ENCODE measurements at regions of chr15 and their contacts with region 1.

Region 1: DNA sequence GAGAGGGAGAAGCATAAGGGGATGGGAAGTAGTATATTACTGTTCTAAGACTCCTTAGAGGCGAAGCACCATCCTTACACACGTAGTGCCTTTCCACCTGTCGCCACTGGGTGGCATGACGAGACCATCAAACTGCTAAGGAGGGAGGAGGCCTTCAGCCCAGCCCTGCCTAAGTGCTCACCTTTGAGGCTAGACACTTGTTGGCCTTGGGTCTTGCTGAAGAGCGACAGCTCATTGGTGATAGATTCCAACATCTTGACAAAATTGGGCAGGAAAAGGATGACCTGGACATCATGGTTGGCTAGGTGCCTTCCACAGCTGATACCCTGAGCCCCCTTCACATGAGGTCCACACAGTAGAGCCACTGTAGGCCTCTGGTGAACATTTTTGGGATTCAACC is 19.6 kb downstream of the CLK3 start:
- DNase-seq: peak; percentile 84
- ATAC-seq: peak; percentile 94
- H3K4me3 Mint-ChIP-seq: no peak overlapping the region
- H3K27ac Mint-ChIP-seq: peak overlapping the region; percentile 39
- H3K4me1 Mint-ChIP-seq: no peaks in the 10 kb centered on the region
- H3K27me3 Mint-ChIP-seq: no peaks in the 10 kb centered on the region
- CTCF ChIP-seq: peak; percentile 89

Region 2: GRCh38 chr15:74525946-74526345 is 109.3 kb before region 1 on chr15:
- CTCF ChIA-PET with region 1: no interaction called
- POLR2A ChIA-PET with region 1: no interaction called
- intact Hi-C with region 1: no loop called
- DNase-seq: no peak
- ATAC-seq: no peak
- H3K4me3 Mint-ChIP-seq: no peak overlapping the region
- H3K27ac Mint-ChIP-seq: no peak overlapping the region
- H3K4me1 Mint-ChIP-seq: peaks cover 5% of the 10 kb centered on the region
- H3K27me3 Mint-ChIP-seq: no peaks in the 10 kb centered on the region
- CTCF ChIP-seq: no peak

Region 3: DNA sequence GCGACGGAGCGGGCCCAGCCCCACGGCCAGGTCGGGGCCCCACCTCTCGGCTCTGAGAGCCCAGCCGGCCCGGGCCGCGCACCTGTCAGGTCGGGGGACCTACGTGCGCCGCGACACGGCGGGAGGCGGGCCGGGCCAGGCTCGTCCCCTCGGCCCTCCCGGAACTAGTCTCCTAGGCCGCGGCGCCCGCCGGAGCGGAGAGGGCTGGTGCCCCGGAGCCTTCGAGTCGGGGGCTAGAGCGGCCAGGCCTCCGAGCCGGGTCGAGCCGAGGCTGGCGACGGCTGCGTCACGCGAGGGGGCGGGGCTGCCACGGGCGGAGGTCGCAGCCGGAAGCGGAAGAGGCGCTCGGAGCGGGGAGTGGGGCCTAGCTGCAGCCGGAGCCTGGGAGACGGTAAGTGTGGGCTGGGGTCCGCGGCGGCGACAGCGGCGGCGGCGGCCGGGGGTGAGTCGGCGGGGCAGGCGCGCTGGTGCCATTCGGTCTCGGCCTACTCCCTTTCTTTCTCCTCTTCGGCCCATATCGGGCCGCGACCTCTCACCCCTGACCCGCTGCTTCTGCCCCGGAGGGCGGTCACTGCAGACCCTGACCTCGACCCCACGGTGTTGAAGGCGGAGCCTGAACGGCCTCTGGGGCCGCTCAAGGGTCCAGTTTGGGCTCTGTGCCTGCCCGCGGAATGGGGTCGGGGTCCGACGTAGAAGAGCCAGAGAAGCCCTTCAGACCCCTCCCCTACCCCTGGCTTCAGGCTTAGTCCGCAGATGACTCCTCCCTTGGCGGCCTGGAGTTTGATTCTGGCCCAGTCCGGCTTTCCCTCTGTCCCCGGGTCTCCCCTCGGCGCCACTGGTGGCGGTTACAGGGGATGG is 19.5 kb before region 1 on chr15 and contains the start of gene CLK3:
- CTCF ChIA-PET with region 1: interaction called, 203 read pairs
- POLR2A ChIA-PET with region 1: interaction called, 4 read pairs
- intact Hi-C with region 1: no loop called
- DNase-seq: peak; percentile 97
- ATAC-seq: peak; percentile 88
- H3K4me3 Mint-ChIP-seq: peak within 1 kb of the TSS; percentile 92
- H3K27ac Mint-ChIP-seq: peak within 1 kb of the TSS; percentile 98
- H3K4me1 Mint-ChIP-seq: peaks cover 43% of the 10 kb centered on the region
- H3K27me3 Mint-ChIP-seq: no peaks in the 10 kb centered on the region
- CTCF ChIP-seq: no peak
- total RNA-seq, gene CLK3: 159 to 168 TPM

Region 4: DNA sequence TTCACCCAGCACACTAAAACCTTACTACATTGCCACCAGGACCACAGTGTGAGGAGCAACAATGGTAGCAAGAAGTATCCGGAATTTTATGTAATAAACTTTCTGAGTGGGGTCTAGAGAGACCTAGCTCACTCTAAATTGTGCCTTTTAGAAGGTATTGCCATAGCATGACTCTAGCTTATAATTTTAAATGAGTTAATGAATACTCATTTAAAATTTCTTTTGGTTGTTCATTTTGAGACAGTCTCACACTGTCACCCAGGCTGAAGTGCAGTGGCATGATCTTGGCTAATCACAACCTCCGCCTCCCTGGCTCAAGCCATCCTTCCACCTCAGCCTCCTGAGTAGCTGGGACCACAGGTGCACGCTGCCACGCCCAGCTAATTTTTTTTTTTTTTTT is 34.4 kb after region 1 on chr15:
- CTCF ChIA-PET with region 1: interaction called, 14 read pairs
- POLR2A ChIA-PET with region 1: no interaction called
- intact Hi-C with region 1: no loop called
- DNase-seq: no peak
- ATAC-seq: no peak
- H3K4me3 Mint-ChIP-seq: no peak overlapping the region
- H3K27ac Mint-ChIP-seq: no peak overlapping the region
- H3K4me1 Mint-ChIP-seq: peaks cover 6% of the 10 kb centered on the region
- H3K27me3 Mint-ChIP-seq: no peaks in the 10 kb centered on the region
- CTCF ChIP-seq: no peak

Region 5: DNA sequence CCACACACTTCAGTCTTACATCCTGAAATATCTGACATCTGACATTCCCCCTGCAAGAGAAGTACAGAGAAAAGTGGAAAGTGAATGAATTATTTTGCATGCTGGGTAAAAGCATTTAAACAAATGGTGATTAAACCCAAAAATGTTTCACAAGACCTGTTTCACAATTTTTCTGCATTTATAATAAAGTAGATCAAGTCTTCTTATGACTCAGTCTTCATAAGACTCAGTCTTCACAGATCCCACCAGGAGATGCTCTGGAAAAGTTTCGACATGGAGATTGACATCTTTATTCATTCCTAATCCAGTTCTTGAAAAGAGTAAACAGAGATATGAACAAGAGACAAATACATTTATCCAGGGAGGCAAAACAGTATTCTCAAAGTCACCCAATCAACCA is 73.8 kb after region 1 on chr15:
- CTCF ChIA-PET with region 1: no interaction called
- POLR2A ChIA-PET with region 1: no interaction called
- intact Hi-C with region 1: no loop called
- DNase-seq: no peak
- ATAC-seq: no peak
- H3K4me3 Mint-ChIP-seq: no peak overlapping the region
- H3K27ac Mint-ChIP-seq: no peak overlapping the region
- H3K4me1 Mint-ChIP-seq: peaks cover 5% of the 10 kb centered on the region
- H3K27me3 Mint-ChIP-seq: peaks cover 9% of the 10 kb centered on the region
- CTCF ChIP-seq: no peak

Region 6: GRCh38 chr15:74754593-74755215 is 119.5 kb after region 1 on chr15:
- CTCF ChIA-PET with region 1: interaction called, 576 read pairs
- POLR2A ChIA-PET with region 1: no interaction called
- intact Hi-C with region 1: no loop called
- DNase-seq: no peak
- ATAC-seq: no peak
- H3K4me3 Mint-ChIP-seq: no peak overlapping the region
- H3K27ac Mint-ChIP-seq: no peak overlapping the region
- H3K4me1 Mint-ChIP-seq: no peaks in the 10 kb centered on the region
- H3K27me3 Mint-ChIP-seq: no peaks in the 10 kb centered on the region
- CTCF ChIP-seq: no peak

Region 7: DNA sequence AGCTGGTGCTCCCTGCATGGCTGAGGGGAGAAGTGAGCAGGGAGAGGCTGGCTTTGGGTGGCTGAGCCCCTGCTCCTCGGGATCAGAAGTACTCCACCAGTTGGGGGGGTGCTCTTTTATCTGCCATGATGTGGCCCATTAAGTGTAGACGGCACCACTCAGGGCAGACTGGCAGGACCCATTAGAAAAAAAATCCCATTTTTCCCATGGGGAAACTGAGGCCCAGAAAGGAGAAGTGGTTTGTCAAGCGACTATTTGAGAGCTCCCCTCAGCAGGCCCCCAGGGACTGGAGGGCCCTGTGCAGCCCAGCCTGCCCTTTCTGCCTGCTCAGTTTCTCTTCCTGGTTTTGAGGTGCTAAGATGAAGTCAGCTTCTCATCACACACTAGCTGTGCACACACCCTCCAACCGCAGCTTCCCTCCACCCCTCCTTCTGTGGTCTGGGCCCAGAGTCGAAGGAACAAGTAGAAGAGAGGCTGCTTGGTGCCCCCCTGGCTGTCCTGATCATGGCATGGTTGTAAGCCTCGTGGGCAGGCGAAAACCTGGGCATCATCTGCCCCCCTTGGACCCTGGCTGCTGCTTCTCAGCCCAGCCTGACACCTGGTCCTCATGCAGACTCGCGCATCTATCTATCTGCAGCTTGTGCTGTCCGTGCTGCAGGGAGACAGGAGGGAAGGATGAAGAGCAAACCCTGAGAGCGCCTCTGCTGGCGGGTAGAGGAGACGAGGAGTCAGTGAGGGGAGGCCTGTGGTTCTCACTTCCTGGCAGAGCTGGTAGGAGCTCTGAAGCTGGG is 152.2 kb after region 1 on chr15:
- CTCF ChIA-PET with region 1: interaction called, 13 read pairs
- POLR2A ChIA-PET with region 1: interaction called, 3 read pairs
- intact Hi-C with region 1: no loop called
- DNase-seq: peak; percentile 98
- ATAC-seq: peak; percentile 70
- H3K4me3 Mint-ChIP-seq: peak overlapping the region; percentile 98
- H3K27ac Mint-ChIP-seq: peak overlapping the region; percentile 98
- H3K4me1 Mint-ChIP-seq: peaks cover 53% of the 10 kb centered on the region
- H3K27me3 Mint-ChIP-seq: no peaks in the 10 kb centered on the region
- CTCF ChIP-seq: peak; percentile 81

Region 8: DNA sequence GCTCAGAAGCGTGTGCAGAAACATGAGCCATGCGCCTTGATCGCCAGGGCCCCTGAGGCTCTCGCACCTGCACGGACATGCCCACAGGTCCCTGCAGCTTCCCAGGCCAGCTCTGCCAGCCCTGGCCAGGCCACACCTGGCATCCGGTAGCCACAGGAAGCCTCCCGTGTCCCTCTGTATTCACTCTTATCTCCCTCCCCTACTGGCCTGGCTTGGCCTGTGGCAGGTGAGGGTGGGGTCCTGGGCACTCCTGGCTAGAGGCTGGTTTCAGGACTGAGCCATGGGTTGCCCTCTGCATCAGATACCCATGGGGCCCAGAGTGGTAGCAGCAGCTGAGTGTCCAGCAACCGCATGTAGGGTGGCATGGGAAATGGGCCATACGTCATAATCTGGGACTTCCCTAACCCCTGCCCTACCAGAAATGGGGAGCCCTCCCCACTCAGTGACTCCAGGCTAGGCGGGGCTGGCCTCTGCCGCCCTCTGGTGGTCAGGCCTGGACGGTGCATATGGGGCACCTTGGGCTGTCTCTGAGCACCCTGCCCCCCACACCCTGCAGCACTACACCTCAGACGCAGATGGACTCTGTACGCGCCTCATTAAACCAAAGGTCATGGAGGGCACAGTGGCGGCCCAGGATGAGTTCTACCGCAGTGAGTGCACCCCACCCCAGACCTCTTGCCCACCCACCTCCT is 164.8 kb after region 1 on chr15:
- CTCF ChIA-PET with region 1: interaction called, 24 read pairs
- POLR2A ChIA-PET with region 1: no interaction called
- intact Hi-C with region 1: no loop called
- DNase-seq: peak; percentile 91
- ATAC-seq: peak; percentile 91
- H3K4me3 Mint-ChIP-seq: no peak overlapping the region
- H3K27ac Mint-ChIP-seq: peak overlapping the region; percentile 90
- H3K4me1 Mint-ChIP-seq: peaks cover 46% of the 10 kb centered on the region
- H3K27me3 Mint-ChIP-seq: no peaks in the 10 kb centered on the region
- CTCF ChIP-seq: peak; percentile 98

Measured in activated CD8-positive, alpha-beta T cell treated with anti-CD3 and anti-CD28 coated beads for 36 hours (primary cell).